ENCODE measurements at regions of chr6 and their contacts with region 1.

Region 1: DNA sequence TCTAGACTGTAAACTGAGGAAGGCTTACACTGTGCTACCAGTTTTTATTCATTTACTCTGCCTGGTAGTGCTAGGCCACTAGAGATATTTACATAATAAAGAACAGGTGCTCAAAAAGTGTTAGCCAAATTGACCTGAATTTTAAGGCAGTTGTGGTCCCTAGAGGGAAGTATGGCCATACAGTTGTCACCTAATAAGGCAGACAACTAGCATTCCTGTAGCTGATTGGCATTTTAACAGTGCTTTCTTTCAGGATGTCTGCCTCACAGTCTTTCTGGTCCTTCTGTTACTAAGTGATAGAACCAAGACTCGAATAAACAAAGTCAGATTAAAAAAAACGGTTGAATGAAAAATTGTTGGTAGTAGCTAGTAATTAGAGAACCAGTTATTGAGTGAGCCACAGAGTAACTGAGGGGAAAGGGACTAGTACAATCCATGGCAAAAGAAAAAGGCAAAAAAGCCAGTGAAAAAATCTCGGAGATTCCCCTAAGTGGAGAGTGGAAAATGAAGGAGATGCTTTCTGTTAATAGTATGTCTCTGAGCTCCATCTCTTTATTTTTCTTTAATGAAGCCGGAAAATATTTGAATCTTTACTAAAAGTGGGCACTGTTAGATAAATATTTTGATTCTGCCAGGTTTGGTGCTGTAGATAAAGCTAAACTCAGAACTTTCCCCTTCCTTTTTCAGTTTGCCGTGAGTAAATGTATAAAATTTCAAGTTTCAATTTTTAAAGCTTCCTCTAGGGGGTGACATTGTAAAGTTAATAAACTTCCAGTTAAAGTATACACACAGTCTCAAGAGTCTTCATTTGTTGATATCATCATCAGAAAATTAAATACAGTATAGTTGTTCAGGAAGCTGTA is 9.1 kb downstream of the VTA1 start:
- DNase-seq: peak; percentile 54
- H3K4me3 ChIP-seq: no peak overlapping the region
- H3K27ac ChIP-seq: peak overlapping the region; percentile 14; the same call in 1 of the 2 replicates
- H3K4me1 ChIP-seq: peaks cover 45% of the 10 kb centered on the region
- H3K27me3 ChIP-seq: no peaks in the 10 kb centered on the region

Region 2: DNA sequence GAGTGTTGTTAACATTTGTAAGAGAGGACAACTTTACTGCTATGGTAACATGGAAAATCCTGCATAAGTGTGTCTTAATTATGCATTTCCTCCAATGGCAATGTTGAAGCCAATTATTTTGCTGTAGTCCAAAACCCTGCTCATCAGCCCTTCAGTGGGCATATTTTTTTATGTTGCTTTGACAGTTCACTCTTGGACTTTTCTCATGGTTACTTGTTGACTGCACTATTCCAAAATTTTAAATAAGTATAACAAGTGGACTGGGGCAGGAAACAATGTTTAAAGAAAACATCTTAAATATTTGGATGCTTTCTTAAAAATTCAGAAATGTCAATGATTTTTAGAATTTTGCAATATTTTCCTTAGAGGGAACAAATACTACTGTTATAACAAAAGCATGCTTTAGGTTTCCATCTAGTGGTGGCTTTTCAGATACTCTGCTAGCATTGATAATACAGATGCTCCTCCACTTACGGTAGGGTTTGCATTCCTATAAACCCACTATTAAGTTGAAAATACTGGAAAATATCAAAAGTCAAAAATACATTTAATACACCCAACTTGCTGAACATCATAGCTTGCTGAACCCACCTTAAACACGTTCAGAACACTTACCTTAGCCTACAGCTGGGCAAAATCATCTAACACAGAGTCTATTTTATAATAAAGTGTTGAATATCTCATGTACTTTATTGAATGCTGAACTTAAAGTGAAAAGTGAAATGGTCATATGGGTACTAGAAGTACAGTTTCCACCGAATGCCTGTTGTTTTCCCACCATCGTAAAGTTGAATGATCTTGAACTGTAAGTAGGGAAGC is 232.1 kb after region 1 on chr6:
- in situ Hi-C with region 1: loop called (anchors 25 kb)
- DNase-seq: peak; percentile 73
- H3K4me3 ChIP-seq: no peak overlapping the region
- H3K27ac ChIP-seq: no peak overlapping the region
- H3K4me1 ChIP-seq: peaks cover 24% of the 10 kb centered on the region
- H3K27me3 ChIP-seq: no peaks in the 10 kb centered on the region